CD4-positive, alpha-beta memory T cell (primary cell): ENCODE measurements at regions of chr7 and their contacts with region 1.

Region 1: DNA sequence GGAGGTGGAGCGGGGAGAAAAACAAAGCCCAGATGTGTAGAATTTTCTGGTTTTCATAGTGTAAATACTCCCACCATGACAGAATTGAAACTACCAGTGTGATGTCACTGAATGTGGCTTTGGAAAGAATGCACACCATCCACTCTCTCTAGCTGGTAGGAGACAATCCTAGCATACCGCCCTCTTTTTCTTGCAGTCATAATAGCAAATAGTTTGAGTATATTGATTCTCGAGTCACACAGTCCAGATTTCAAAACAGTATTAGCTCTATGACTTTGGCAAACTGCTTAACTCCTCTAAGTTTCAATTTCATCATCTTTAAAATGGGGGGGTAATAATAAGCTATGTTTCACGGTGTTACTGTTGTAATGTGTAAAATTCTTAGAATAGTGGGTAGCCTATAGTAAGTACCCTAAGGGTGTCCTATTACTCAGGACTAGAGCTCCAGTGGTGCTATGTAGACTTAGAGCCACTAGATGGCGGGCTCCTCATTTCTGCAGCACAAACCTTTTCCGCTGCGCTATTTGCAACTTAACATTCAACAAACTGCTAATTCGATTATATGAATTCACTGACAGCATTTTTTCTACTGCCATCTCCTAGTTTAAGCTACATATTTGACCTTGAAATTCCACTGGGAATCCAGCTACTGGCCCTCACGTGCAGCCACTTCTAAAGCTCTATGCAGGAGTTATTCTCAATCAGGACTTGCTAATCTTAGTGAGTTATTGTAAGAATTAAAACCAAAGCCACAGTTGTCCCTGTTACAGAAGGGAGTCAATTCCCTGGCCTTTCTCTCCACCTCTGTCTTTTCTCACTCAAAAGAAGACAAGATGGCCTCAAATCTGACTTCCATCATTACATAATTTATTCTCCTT is 18.7 kb downstream of the TAS2R40 start:
- DNase-seq: peak; percentile 74 to 79 (median 77)
- H3K4me3 ChIP-seq: no peak overlapping the region
- H3K4me3 Mint-ChIP-seq: peak overlapping the region in 3 of 8 donors; percentile 30 to 57 (median 37)
- H3K27ac ChIP-seq: no peak overlapping the region
- H3K27ac Mint-ChIP-seq: peak overlapping the region in 5 of 7 donors; percentile 14 to 77 (median 48)
- H3K4me1 ChIP-seq: peaks cover 24% of the 10 kb centered on the region
- H3K4me1 Mint-ChIP-seq: peaks cover 24 to 40% (median 31%) of the 10 kb centered on the region in 4 donors
- H3K27me3 ChIP-seq: peaks cover 6% of the 10 kb centered on the region
- H3K27me3 Mint-ChIP-seq: peaks cover 2 to 11% of the 10 kb centered on the region in 2 donors

Region 2: GRCh38 chr7:143263266-143264195 is 23.0 kb after region 1 on chr7 and contains the start of gene GSTK1:
- CTCF ChIA-PET with region 1: interaction called, 252 read pairs
- POLR2A ChIA-PET with region 1: interaction called, 33 read pairs
- intact Hi-C with region 1: loop called (anchors 1 kb)
- DNase-seq: peak; percentile 69 to 86 (median 75)
- H3K4me3 ChIP-seq: peak within 1 kb of the TSS; percentile 89 to 90
- H3K4me3 Mint-ChIP-seq: peak within 1 kb of the TSS; percentile 93 to 99 (median 96)
- H3K27ac ChIP-seq: peak within 1 kb of the TSS; percentile 89
- H3K27ac Mint-ChIP-seq: peak within 1 kb of the TSS; percentile 91 to 98 (median 94)
- H3K4me1 ChIP-seq: peaks cover 72% of the 10 kb centered on the region
- H3K4me1 Mint-ChIP-seq: peaks cover 40 to 81% (median 62%) of the 10 kb centered on the region in 4 donors
- H3K27me3 ChIP-seq: no peaks in the 10 kb centered on the region
- H3K27me3 Mint-ChIP-seq: no peaks in the 10 kb centered on the region
- total RNA-seq, gene GSTK1: 469 to 482 TPM

Region 3: DNA sequence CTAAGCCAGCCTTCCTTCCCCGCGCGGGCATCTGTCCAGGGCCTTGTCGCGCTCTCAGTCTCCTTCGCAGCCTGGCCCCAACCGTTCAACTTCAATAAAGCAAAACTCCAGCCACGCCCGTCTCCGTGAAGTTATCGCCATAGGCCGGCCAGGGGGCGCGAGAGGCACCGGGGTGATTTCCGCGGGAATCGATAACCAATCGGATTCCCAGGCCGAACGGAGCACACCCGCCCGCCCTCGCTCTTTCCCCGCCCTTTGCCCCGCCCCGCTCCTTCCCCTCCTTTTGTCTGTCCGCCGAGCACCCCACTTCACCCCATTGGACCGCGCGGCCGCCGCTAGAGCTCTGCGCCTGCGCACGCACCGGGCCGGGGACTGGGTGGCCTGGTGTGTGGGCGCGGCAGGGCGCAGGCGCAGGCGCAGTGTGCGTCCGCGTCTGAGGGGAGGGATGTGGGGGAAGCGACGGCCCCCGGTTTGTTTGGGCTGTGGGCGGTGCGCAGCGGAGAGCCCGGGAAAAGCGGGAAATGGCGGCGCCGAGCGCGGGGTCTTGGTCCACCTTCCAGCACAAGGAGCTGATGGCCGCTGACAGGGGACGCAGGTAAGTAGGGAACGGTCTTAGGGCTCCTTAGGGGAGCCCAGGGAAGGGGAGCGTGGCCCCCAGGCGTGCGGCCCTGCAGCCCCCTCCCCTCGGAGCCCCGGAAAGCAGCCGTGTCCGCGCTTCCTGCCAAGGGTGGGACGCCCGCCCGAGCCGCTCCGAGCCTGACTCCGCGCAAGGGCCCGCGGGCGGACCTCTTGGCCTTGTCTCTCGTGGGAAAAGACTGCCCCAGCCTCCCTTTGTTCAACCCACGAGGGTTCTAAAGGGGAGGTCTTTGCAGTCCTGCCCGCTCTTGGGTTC is 47.7 kb after region 1 on chr7 and contains the start of gene CASP2:
- CTCF ChIA-PET with region 1: interaction called, 513 read pairs
- POLR2A ChIA-PET with region 1: interaction called, 19 read pairs
- intact Hi-C with region 1: no loop called
- DNase-seq: peak; percentile 99 to 100 (median 99)
- H3K4me3 ChIP-seq: peak within 1 kb of the TSS; percentile 82 to 92
- H3K4me3 Mint-ChIP-seq: peak within 1 kb of the TSS; percentile 92 to 99 (median 96)
- H3K27ac ChIP-seq: peak within 1 kb of the TSS; percentile 78
- H3K27ac Mint-ChIP-seq: peak within 1 kb of the TSS; percentile 83 to 98 (median 95)
- H3K4me1 ChIP-seq: peaks cover 44% of the 10 kb centered on the region
- H3K4me1 Mint-ChIP-seq: peaks cover 39 to 75% (median 57%) of the 10 kb centered on the region in 4 donors
- H3K27me3 ChIP-seq: no peaks in the 10 kb centered on the region
- H3K27me3 Mint-ChIP-seq: no peaks in the 10 kb centered on the region
- total RNA-seq, gene CASP2: 94.3 to 96.1 TPM

Region 4: GRCh38 chr7:143316492-143316891 is 76.0 kb after region 1 on chr7:
- CTCF ChIA-PET with region 1: interaction called, 60 read pairs
- POLR2A ChIA-PET with region 1: interaction called, 3 read pairs
- intact Hi-C with region 1: no loop called
- DNase-seq: no peak
- H3K4me3 ChIP-seq: no peak overlapping the region
- H3K4me3 Mint-ChIP-seq: no peak overlapping the region
- H3K27ac ChIP-seq: no peak overlapping the region
- H3K27ac Mint-ChIP-seq: peak overlapping the region in 1 of 7 donors; percentile 17
- H3K4me1 ChIP-seq: no peaks in the 10 kb centered on the region
- H3K4me1 Mint-ChIP-seq: peaks cover 2 to 9% (median 5%) of the 10 kb centered on the region in 4 donors
- H3K27me3 ChIP-seq: no peaks in the 10 kb centered on the region
- H3K27me3 Mint-ChIP-seq: peaks cover 0 to 2% of the 10 kb centered on the region in 2 donors

Region 5: GRCh38 chr7:143372070-143372469 is 131.5 kb after region 1 on chr7:
- CTCF ChIA-PET with region 1: interaction called, 23 read pairs
- POLR2A ChIA-PET with region 1: interaction called, 5 read pairs
- intact Hi-C with region 1: loop called (anchors 1 kb)
- DNase-seq: peak; percentile 46 to 65 (median 55)
- H3K4me3 ChIP-seq: no peak overlapping the region
- H3K4me3 Mint-ChIP-seq: peak overlapping the region in 7 of 8 donors; percentile 21 to 66 (median 62)
- H3K27ac ChIP-seq: no peak overlapping the region
- H3K27ac Mint-ChIP-seq: peak overlapping the region; percentile 65 to 90 (median 74)
- H3K4me1 ChIP-seq: peaks cover 43% of the 10 kb centered on the region
- H3K4me1 Mint-ChIP-seq: peaks cover 40 to 60% (median 50%) of the 10 kb centered on the region in 4 donors
- H3K27me3 ChIP-seq: no peaks in the 10 kb centered on the region
- H3K27me3 Mint-ChIP-seq: peaks cover 0 to 2% of the 10 kb centered on the region in 2 donors

Region 6: DNA sequence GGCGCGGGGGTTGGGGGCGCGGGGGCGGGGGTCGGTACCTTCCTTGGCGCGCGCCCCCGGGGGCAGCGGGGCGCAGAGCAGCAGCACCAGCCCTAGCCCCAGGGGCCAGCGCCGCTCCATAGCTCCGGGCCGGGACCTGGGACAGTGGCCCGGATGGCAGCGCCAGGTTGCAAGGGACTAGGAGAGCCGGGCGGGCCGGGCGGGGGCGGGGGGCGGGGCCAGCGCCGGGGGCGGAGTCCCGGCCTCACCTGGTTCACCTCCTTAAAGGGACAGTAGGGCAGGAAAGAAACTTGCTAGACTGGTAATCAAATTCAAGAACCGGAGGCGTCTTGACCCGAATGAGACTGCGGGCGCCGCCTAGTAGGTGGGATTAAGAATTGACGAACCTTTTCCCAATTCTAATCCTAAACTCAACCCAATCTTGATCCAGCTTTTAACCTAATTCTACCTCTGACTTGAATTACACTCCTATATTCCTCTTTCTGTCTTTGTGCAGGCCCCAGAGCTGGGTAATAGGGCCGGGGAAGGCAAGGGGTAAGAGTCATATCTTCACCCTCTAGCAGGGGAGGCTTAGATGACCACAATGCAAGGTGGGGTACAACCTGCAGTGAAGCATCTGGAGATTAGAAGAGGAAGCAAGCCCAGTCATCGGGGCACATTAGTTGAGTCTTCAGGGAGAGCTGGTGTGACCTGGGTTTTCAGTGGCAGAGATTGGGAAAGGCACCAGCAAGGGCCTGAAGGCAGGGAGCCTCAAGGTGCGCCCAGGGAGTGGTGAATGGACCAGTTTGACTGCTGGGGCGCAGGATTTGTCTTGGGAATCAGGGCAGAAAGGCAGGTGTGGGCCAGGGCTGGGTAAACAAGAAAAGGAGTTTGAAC is 168.4 kb after region 1 on chr7 and contains the start of gene EPHA1:
- CTCF ChIA-PET with region 1: interaction called, 104 read pairs
- POLR2A ChIA-PET with region 1: interaction called, 10 read pairs
- intact Hi-C with region 1: loop called (anchors 1 kb)
- DNase-seq: peak; percentile 52 to 62 (median 57)
- H3K4me3 ChIP-seq: peak within 1 kb of the TSS; percentile 58 to 66
- H3K4me3 Mint-ChIP-seq: peak within 1 kb of the TSS; percentile 89 to 97 (median 92)
- H3K27ac ChIP-seq: peak within 1 kb of the TSS; percentile 15
- H3K27ac Mint-ChIP-seq: peak within 1 kb of the TSS; percentile 76 to 96 (median 96)
- H3K4me1 ChIP-seq: peaks cover 48% of the 10 kb centered on the region
- H3K4me1 Mint-ChIP-seq: peaks cover 47 to 73% (median 55%) of the 10 kb centered on the region in 4 donors
- H3K27me3 ChIP-seq: no peaks in the 10 kb centered on the region
- H3K27me3 Mint-ChIP-seq: no peaks in the 10 kb centered on the region
- total RNA-seq, gene EPHA1: 30.7 to 34.4 TPM